ENCODE measurements at regions of chr2 and their contacts with region 1.

Region 1: DNA sequence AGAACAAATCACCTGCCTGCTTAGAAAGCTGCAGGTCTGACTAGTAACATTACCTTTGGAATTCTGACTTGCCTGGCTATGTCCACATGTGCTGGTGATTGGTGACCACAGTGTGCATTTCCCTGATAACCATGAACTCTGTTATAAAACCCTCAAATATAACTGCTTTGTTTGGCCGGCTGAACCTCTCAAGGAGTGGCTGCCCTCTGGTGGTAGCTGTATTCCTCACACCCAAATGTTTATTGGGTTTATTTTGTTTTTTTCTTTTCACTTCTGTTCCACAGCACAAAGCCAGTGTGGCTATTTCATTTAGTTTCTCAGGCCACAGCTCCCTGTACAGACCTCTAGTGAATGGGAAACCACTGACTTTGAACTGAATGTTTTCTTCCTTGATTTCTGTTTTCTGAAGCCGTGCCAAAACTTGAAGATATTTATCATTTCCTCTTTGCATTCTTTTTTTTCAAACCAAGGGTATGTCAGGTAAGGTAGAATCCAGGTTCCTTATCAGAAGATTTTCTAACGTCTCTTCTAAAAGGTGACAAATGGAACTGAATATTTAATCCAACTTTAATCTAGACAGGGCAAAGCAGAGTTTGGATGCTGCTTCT is 549.0 kb upstream of the VRK2 start:
- DNase-seq: peak; percentile 34
- CTCF ChIP-seq: peak; percentile 80

Region 2: DNA sequence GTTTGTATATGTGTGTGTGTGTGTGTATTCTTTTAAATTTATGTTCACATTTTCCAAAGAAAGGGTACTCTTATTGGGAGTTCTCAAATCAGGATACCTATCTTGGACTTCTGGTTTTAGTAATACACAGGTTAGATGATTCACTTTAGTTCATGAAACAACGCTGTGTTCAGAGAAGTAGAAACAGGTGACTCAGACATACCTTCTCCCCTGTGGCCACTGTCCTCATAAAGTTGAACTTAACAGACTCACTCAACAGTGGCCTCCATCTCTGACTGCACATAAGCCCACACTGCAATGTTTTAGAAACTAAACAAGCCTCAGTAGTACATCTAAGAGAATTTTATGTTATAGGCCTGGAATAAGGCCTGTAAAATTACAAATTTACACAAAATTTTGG is 17.6 kb before region 1 on chr2:
- CTCF ChIA-PET with region 1: interaction called, 12 read pairs
- POLR2A ChIA-PET with region 1: no interaction called
- DNase-seq: no peak
- CTCF ChIP-seq: no peak

Region 3: DNA sequence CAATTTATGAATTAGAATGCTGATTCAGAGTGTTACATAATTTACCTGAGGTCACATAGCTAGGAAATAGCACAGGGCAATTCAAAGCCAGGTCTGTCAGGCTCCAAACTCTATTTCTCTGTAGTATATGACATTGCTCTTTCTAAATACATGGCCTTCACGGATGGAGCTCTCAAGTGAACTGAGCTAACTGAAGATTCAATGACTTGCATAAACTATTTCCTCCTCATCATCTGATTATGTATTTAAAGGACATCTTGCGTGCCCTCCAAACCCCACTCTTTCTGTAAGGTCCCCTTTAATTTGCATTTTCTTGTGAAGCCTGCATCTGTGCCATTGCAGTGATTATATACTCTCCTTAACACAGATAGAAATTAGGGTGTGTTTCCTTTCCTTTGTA is 11.6 kb after region 1 on chr2:
- CTCF ChIA-PET with region 1: interaction called, 19 read pairs
- POLR2A ChIA-PET with region 1: no interaction called
- DNase-seq: no peak
- CTCF ChIP-seq: no peak

Region 4: GRCh38 chr2:57516698-57517340 is 19.2 kb after region 1 on chr2:
- CTCF ChIA-PET with region 1: interaction called, 16 read pairs
- POLR2A ChIA-PET with region 1: interaction called, 9 read pairs
- DNase-seq: peak; percentile 40
- CTCF ChIP-seq: peak; percentile 54